ENCODE measurements at regions of chr6 and their contacts with region 1.

Region 1: GRCh38 chr6:133241086-133241900 is at the start of gene EYA4:
- DNase-seq: peak; percentile 71
- ATAC-seq: peak; percentile 72
- total RNA-seq, gene EYA4: 19.5 TPM

Region 2: DNA sequence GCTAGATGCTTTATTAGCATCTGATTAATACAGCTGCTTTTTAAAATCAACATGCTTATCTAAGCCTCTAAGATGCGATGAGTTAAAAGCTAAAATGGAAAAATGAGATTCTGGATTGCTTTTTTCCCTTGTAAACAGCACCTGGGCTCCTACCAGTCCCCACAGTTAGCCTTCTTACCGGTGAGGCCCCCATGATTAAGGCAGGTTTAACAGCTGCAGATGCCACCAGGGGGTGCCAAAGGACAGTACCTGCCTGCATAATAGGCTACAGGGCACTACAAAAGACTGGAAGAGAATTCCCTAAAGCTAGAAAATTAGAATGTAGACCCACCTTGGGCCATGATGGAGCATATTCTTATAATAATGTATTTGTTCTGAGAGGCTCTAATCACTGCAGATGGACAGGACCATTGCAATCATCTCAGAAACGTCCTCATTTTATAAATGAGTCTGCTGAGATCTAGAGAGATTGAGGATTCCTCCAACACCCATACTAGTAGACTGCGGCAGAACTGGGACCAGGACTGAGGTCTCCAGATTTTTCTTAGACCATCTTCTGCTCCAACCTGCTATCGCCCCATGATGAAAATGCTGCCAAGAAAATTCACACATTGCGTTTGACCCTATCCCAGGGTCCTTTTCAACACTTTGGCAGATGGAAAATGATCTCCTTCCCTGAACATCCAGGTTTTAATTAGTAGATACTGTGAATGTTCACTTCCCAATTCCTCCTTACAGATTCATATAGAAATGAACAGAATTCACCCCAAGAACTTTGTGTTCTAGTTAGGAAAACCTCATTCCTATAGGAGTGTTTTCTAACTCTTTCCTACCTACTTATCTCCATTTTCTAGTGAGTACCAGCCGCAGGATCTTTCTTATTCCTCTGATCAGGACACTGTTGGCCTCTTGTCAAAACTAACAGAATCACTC is 278.1 kb before region 1 on chr6:
- intact Hi-C with region 1: loop called (anchors 5 kb)
- DNase-seq: no peak
- ATAC-seq: peak; percentile 77

Region 3: GRCh38 chr6:133062077-133062476 is 179.2 kb before region 1 on chr6:
- intact Hi-C with region 1: loop called (anchors 2 kb)
- DNase-seq: no peak
- ATAC-seq: peak; percentile 92

Region 4: GRCh38 chr6:133130863-133131262 is 110.4 kb before region 1 on chr6:
- intact Hi-C with region 1: loop called (anchors 5 kb)
- DNase-seq: peak; percentile 75
- ATAC-seq: peak; percentile 97

Region 5: DNA sequence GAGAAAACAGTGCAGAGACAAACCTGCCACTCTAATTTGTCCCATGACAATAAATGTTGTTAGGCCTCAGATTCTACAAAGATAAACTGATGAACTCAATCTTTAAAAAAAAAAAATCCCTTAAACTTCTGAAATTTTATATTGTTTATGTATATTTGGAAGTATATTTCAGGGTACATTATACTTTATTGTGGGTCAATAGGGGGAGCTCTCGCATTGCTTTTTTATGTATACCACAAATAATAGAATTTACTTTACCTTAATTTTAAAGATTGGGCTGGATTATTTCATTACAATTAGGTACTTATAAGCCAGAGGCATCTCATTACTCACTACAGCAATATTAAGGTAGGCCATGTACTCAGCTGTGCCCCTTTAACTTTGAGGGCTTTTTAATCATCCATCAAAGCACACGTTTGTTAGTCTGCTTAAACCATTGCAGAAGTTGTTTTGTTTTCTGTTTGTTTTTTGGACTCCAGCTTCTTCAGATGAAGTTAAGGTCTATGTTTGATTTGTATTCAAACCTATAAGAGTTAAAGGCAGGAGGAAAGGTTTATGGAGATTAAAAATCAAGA is 56.4 kb before region 1 on chr6:
- intact Hi-C with region 1: loop called (anchors 5 kb)
- DNase-seq: no peak
- ATAC-seq: no peak

Region 6: GRCh38 chr6:133368664-133369063 is 127.4 kb after region 1 on chr6:
- intact Hi-C with region 1: loop called (anchors 10 kb)
- DNase-seq: no peak
- ATAC-seq: no peak

Region 7: DNA sequence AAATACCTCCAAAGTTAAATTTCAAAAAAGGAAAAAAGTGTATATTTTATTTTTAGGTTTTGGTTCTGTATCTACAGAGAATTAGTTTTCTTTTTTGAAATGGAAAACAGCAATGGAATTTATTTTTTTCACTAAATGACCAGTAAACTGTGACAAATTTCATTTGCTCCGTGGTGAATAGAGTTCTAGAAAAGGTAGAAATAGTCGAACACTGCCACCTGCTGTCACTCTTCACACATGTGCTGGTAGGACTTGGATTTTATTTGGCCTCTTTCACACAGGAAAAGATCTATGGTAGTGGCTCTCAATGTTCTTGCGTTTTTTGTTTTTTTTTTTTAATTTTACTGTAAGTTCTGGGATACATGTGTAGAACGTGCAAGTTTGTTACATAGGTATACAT is 312.4 kb after region 1 on chr6:
- intact Hi-C with region 1: loop called (anchors 5 kb)
- DNase-seq: no peak
- ATAC-seq: no peak